T-cell (primary cell): ENCODE measurements at regions of chr20 and their contacts with region 1.

Region 1: GRCh38 chr20:34676642-34677373 is at the start of gene PIGU:
- DNase-seq: peak; percentile 89 to 98 (median 96)
- ATAC-seq: peak; percentile 95 to 99 (median 98)
- H3K4me3 ChIP-seq: peak within 1 kb of the TSS; percentile 77 to 86
- H3K4me3 Mint-ChIP-seq: peak within 1 kb of the TSS; percentile 93 to 95 (median 94)
- H3K27ac ChIP-seq: peak within 1 kb of the TSS; percentile 76
- H3K27ac Mint-ChIP-seq: peak within 1 kb of the TSS; percentile 88 to 90
- H3K4me1 ChIP-seq: peaks cover 9 to 18% of the 10 kb centered on the region in 2 experiments
- H3K4me1 Mint-ChIP-seq: peaks cover 18 to 25% (median 19%) of the 10 kb centered on the region in 3 donors
- H3K27me3 ChIP-seq: no peaks in the 10 kb centered on the region
- H3K27me3 Mint-ChIP-seq: no peaks in the 10 kb centered on the region
- total RNA-seq, gene PIGU: 8.6 to 17.1 (median 13.6) TPM

Region 2: DNA sequence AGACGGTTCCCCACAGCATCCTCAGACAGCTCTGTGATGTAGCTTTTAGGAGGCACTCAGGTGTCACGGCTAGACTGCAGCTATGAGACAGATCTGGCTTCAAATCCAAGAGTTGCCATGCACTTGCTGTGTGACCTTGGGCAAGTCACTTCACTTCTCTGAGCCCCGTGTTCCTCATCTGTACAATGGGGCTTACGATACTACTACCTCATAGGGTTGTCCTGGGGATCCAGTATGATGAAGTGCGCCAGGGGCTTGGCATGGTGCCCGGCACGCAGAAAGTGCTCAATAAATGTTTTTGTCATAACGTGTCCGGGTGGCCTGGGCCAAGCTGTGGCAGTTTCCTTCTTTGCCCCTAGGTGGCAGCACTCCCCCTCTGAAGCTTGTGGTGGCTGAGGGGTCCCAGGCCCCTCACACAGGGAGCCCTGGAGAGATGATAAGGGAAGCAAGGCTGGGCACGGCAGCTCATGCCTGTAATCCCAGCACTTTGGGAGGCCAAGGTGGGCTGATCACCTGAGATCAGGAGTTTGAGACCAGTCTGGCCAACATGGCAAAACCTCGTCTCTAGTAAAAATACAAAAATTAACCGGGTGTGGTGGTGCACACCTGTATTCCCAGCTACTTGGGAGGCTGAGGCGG is 884.7 kb before region 1 on chr20:
- CTCF ChIA-PET with region 1: no interaction called
- POLR2A ChIA-PET with region 1: no interaction called
- DNase-seq: peak in 30 of 35 experiments; percentile 8 to 67 (median 34)
- ATAC-seq: peak in 3 of 4 experiments; percentile 60 to 69 (median 62)
- H3K4me3 ChIP-seq: no peak overlapping the region
- H3K4me3 Mint-ChIP-seq: no peak overlapping the region
- H3K27ac ChIP-seq: no peak overlapping the region
- H3K27ac Mint-ChIP-seq: no peak overlapping the region
- H3K4me1 ChIP-seq: peaks cover 2 to 13% of the 10 kb centered on the region in 2 experiments
- H3K4me1 Mint-ChIP-seq: peaks cover 6 to 14% (median 8%) of the 10 kb centered on the region in 3 donors
- H3K27me3 ChIP-seq: no peaks in the 10 kb centered on the region
- H3K27me3 Mint-ChIP-seq: no peaks in the 10 kb centered on the region

Region 3: GRCh38 chr20:34704177-34705007 is 27.6 kb after region 1 on chr20 and contains the start of gene TP53INP2:
- CTCF ChIA-PET with region 1: interaction called, 3 read pairs
- POLR2A ChIA-PET with region 1: interaction called, 3 to 16 read pairs
- DNase-seq: peak; percentile 53 to 95 (median 86)
- ATAC-seq: peak; percentile 65 to 72 (median 67)
- H3K4me3 ChIP-seq: peak within 1 kb of the TSS; percentile 78 to 90
- H3K4me3 Mint-ChIP-seq: peak within 1 kb of the TSS; percentile 85 to 95 (median 92)
- H3K27ac ChIP-seq: peak within 1 kb of the TSS; percentile 73
- H3K27ac Mint-ChIP-seq: peak within 1 kb of the TSS; percentile 86 to 91
- H3K4me1 ChIP-seq: peaks cover 0 to 29% of the 10 kb centered on the region in 2 experiments
- H3K4me1 Mint-ChIP-seq: peaks cover 19 to 31% (median 23%) of the 10 kb centered on the region in 3 donors
- H3K27me3 ChIP-seq: peaks cover 0 to 19% of the 10 kb centered on the region in 2 experiments
- H3K27me3 Mint-ChIP-seq: peaks cover 5 to 6% of the 10 kb centered on the region in 2 donors
- total RNA-seq, gene TP53INP2: 1.3 to 56.7 (median 1.9) TPM

Region 4: DNA sequence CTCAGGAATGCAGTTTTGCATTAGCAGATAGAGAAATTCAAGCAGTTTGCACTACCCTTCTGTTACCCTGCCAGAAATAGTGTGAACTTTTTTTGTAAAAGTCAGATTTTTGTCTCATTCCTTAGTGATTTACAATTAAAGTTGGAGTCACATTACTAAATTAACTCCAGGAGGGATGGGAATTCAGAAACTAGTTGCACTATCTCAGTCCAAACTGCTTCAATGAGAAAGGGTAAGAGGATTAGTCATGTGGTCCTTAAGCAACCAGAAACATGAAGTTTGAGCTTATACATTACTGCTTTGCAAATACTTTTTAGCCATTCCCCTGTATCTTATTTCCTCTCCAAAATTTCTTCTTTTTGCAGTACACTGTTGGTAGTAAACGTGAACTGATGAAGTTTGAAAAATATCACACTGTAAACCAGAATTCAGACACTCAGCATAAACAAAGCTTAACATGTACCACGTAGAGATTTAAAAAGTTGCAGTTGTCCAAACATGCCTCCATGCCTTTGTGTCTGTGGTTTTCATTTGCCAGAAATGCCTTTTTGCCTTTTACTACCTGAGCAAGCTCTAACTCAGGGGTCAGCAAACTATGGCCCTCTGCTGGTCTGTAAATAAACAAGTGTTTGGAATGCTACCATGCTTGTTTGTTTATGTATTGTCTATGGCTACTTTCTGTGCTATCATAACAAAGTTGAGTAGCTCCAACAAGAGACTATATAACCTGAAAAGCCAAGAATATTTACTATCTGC is 77.1 kb after region 1 on chr20:
- CTCF ChIA-PET with region 1: no interaction called
- POLR2A ChIA-PET with region 1: no interaction called
- DNase-seq: no peak
- ATAC-seq: no peak
- H3K4me3 ChIP-seq: no peak overlapping the region
- H3K4me3 Mint-ChIP-seq: no peak overlapping the region
- H3K27ac ChIP-seq: no peak overlapping the region
- H3K27ac Mint-ChIP-seq: no peak overlapping the region
- H3K4me1 ChIP-seq: no peaks in the 10 kb centered on the region
- H3K4me1 Mint-ChIP-seq: no peaks in the 10 kb centered on the region
- H3K27me3 ChIP-seq: no peaks in the 10 kb centered on the region
- H3K27me3 Mint-ChIP-seq: no peaks in the 10 kb centered on the region